ENCODE measurements at regions of chr7 and their contacts with region 1.

Region 1: DNA sequence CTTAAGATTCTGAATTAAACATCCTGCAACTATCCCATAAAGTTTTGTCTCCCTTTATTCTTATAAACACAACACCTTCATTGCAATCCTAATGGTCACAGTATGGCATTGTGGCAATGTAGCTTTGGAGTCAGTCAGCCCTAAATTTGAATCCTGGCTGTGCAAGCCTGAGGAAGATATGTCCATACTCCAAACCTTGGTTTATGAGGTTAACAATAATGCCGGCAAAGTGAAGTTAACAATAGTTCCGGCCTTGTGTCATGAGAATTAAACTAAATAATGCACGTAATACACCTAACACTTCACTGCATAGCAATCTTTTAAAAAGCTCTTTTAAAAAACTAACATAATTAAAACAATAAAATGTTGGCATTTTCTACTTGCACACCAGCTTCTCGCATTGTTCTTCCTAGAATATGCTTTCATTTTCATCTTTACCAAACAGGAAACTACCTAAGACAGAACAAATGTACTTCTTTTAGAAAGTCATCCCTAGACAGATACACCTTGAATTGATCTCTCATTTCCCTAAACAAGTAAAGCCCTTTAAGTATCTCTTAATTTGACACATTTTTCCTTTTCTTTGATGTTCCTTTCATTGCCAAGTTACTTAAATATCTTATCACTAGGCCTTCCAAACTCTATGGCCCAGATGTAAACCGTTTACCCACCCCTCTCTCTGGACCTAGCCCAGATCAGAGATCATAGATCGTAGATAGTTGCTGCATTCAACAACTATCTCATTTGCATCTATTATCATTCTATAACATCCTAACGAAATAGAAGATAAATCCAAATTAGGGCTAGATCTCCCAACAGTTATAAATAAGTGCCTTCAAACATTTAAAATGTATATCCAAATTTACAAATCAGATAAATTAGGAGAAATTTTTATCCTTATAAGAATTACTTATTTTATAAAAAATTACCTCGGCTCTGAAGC is 66.7 kb downstream of the CREB3L2 start:
- DNase-seq: no peak
- ATAC-seq: peak; percentile 85
- H3K4me3 Mint-ChIP-seq: peak overlapping the region; percentile 86
- H3K27ac Mint-ChIP-seq: peak overlapping the region; percentile 95
- H3K4me1 Mint-ChIP-seq: peaks cover 29% of the 10 kb centered on the region
- H3K27me3 Mint-ChIP-seq: no peaks in the 10 kb centered on the region

Region 2: GRCh38 chr7:137895301-137896221 is 39.7 kb before region 1 on chr7:
- POLR2A ChIA-PET with region 1: no interaction called
- DNase-seq: no peak
- ATAC-seq: no peak
- H3K4me3 Mint-ChIP-seq: no peak overlapping the region
- H3K27ac Mint-ChIP-seq: peak overlapping the region; percentile 34
- H3K4me1 Mint-ChIP-seq: peaks cover 17% of the 10 kb centered on the region
- H3K27me3 Mint-ChIP-seq: no peaks in the 10 kb centered on the region

Region 3: GRCh38 chr7:138002096-138002827 is 67.0 kb after region 1 on chr7:
- POLR2A ChIA-PET with region 1: interaction called, 11 read pairs
- DNase-seq: peak; percentile 95
- ATAC-seq: peak; percentile 96
- H3K4me3 Mint-ChIP-seq: peak overlapping the region; percentile 92
- H3K27ac Mint-ChIP-seq: peak overlapping the region; percentile 81
- H3K4me1 Mint-ChIP-seq: peaks cover 26% of the 10 kb centered on the region
- H3K27me3 Mint-ChIP-seq: no peaks in the 10 kb centered on the region

Measured in activated naive CD8-positive, alpha-beta T cell treated with anti-CD3 and anti-CD28 coated beads, Interleukin-2, amount 10 ng/mL, durations not matched to agents 7 days and 5 days (primary cell).